H1 (cell line): ENCODE measurements at regions of chr6 and their contacts with region 1.

Region 1: GRCh38 chr6:116648156-116648555 is 20.4 kb downstream of the ZUP1 start:
- DNase-seq: no peak
- H3K4me3 ChIP-seq: no peak overlapping the region
- H3K27ac ChIP-seq: no peak overlapping the region
- H3K4me1 ChIP-seq: no peaks in the 10 kb centered on the region
- H3K27me3 ChIP-seq: no peaks in the 10 kb centered on the region
- CTCF ChIP-seq: no peak
- EP300 ChIP-seq: no peak
- POLR2A ChIP-seq: no peak
- RAD21 ChIP-seq: no peak

Region 2: GRCh38 chr6:116586276-116586675 is 61.9 kb before region 1 on chr6:
- CTCF ChIA-PET with region 1: no interaction called
- POLR2A ChIA-PET with region 1: no interaction called
- DNase-seq: no peak
- H3K4me3 ChIP-seq: no peak overlapping the region
- H3K27ac ChIP-seq: no peak overlapping the region
- H3K4me1 ChIP-seq: no peaks in the 10 kb centered on the region
- H3K27me3 ChIP-seq: peaks cover 0 to 1% (median 0%) of the 10 kb centered on the region in 4 experiments; a peak in 1 of 7 replicates
- CTCF ChIP-seq: no peak
- EP300 ChIP-seq: no peak
- POLR2A ChIP-seq: no peak
- RAD21 ChIP-seq: no peak

Region 3: GRCh38 chr6:116605935-116606334 is 42.2 kb before region 1 on chr6:
- CTCF ChIA-PET with region 1: no interaction called
- POLR2A ChIA-PET with region 1: no interaction called
- DNase-seq: no peak
- H3K4me3 ChIP-seq: no peak overlapping the region
- H3K27ac ChIP-seq: no peak overlapping the region
- H3K4me1 ChIP-seq: peaks cover 0 to under 1% (median under 1%) of the 10 kb centered on the region in 4 experiments; a peak in 3 of 7 replicates
- H3K27me3 ChIP-seq: no peaks in the 10 kb centered on the region
- CTCF ChIP-seq: no peak
- EP300 ChIP-seq: no peak
- POLR2A ChIP-seq: no peak
- RAD21 ChIP-seq: no peak

Region 4: DNA sequence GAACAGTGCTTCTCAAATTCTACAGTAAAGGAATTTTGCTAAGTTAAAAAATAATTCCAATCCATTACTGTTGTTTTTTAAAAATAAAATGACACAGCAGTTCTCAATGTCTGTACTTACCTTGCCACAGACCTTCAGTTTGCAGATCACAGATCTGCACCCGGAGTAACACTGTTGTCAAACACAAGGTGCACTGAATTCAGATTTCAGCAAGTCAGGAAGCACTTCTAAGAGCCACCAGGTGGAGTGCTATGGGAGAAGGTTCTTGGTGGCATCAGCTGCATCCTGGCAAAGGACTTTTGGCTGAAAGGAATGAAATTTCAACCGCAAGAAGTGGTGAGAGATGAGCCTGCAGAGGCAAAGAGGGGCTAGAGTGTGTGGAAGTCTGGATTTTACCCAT is 14.5 kb before region 1 on chr6:
- CTCF ChIA-PET with region 1: interaction called, 10 read pairs
- POLR2A ChIA-PET with region 1: no interaction called
- DNase-seq: no peak
- H3K4me3 ChIP-seq: no peak overlapping the region
- H3K27ac ChIP-seq: no peak overlapping the region
- H3K4me1 ChIP-seq: no peaks in the 10 kb centered on the region
- H3K27me3 ChIP-seq: no peaks in the 10 kb centered on the region
- CTCF ChIP-seq: peak; percentile 30 to 65 (median 60)
- EP300 ChIP-seq: no peak
- POLR2A ChIP-seq: no peak
- RAD21 ChIP-seq: peak; percentile 35 to 47; a peak in 3 of 4 replicates

Region 5: DNA sequence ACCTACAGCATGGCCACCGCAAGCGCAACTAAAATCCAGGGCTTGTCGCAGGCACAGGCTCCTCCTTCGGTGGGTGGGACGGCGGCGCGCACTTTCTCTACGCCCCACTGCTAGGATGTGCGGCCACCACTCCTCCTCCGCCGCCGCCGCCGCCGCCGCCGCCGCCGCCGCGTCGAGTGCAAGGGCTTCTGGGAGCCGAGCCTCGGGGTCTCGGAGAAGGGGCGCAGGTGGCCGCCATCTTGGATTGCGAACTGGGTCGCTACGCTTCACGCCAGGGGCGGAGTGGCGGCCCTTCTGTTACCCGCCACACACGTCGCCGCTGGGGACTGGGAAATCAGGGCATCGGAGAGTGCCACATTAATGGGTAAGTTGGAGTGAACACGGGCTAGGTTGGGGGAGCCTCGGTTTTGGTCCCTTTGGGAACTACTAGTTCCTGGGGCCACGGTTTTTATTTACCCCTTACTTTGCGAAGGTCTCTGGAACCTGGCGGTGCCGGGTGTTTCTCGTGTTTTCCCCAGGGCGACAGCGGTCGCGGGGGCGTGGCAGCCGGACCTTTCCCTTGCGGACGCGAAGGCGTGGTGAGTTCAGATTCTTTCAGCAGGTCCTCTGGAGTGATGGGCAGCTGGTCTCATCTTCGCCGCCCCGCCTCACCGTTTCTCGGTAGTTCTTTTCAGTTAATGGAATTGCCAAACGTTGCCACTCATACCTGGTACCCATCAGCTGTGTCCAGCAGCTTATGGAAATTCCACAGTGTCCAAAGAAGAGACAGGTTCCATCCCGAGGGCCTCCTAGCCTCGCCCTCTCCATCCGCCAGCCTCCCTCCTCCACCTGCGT is 33.0 kb after region 1 on chr6 and contains the start of gene KPNA5:
- CTCF ChIA-PET with region 1: no interaction called
- POLR2A ChIA-PET with region 1: no interaction called
- DNase-seq: peak; percentile 67 to 89
- H3K4me3 ChIP-seq: peak within 1 kb of the TSS; percentile 81 to 93 (median 88)
- H3K27ac ChIP-seq: peak within 1 kb of the TSS; percentile 91
- H3K4me1 ChIP-seq: peaks cover 0 to 2% (median 0%) of the 10 kb centered on the region in 4 experiments; a peak in 1 of 7 replicates
- H3K27me3 ChIP-seq: no peaks in the 10 kb centered on the region
- CTCF ChIP-seq: no peak
- EP300 ChIP-seq: peak in 1 of 2 experiments; percentile 64; a peak in 1 of 3 replicates
- POLR2A ChIP-seq: peak; percentile 63 to 94
- RAD21 ChIP-seq: no peak
- total RNA-seq, gene KPNA5: 9.7 and 11.7 TPM in 2 replicates

Region 6: GRCh38 chr6:117188627-117189201 is 540.6 kb after region 1 on chr6:
- CTCF ChIA-PET with region 1: no interaction called
- POLR2A ChIA-PET with region 1: no interaction called
- DNase-seq: no peak
- H3K4me3 ChIP-seq: no peak overlapping the region
- H3K27ac ChIP-seq: no peak overlapping the region
- H3K4me1 ChIP-seq: no peaks in the 10 kb centered on the region
- H3K27me3 ChIP-seq: no peaks in the 10 kb centered on the region
- CTCF ChIP-seq: peak in 2 of 3 experiments; percentile 42 to 52; a peak in 2 of 4 replicates
- EP300 ChIP-seq: no peak
- POLR2A ChIP-seq: no peak
- RAD21 ChIP-seq: peak; percentile 52 to 56; a peak in 3 of 4 replicates